ENCODE measurements at regions of chr12 and their contacts with region 1.

Region 1: DNA sequence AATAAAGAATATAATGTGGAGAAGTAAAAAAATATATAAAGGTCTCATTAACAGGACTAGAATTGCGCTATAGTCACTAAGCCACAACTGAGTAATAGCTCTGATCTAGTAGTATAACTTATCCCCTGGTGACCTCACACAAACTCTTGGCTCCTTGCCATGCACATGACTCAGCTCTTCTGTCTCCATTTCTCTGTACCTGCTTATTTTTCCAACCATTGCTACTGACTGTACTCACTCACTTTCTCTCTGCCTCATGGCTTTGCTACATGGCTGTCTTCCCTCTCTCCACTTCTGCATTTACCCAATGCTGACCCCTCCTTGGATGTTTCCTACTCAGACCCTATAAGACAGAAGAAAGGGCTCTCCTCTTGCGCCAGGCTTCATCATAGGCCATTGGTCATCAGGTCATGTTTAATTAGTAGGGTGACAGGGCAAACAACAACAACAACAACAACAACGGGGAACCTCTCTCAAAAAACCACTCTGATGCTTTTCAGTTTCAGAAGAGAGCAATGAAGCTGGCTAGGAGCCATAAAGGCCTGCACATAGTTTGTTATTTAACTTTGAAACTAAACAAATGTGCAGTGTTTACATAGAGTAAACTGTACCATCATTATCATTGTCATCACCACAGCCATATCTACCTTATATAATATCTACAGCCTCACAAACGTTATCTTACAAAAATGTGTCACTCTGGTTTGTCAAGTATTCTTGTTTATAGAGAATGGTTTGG is 25.6 kb upstream of the KRAS start:
- DNase-seq: peak; percentile 90
- H3K4me3 Mint-ChIP-seq: no peak overlapping the region
- H3K27ac Mint-ChIP-seq: peak overlapping the region; percentile 14
- H3K4me1 Mint-ChIP-seq: peaks cover 29% of the 10 kb centered on the region
- H3K27me3 Mint-ChIP-seq: no peaks in the 10 kb centered on the region

Region 2: DNA sequence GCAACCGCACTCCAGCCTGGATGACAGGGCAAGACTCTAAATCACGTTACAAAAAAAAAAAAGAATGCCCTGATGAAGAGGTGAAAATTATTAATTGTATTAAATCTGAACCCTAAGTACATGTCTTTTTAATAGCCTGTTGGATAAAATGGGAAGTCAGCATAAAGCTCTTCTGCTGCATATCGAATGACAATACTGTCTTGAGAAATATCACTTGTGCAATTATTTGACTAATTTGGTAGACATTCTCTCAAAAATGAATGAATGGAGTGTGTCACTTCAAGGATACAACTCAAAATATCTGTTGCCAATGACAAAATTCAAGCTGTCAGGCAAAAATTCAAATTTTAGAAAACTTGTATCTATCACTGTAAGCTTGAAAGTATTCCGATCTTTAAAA is 120.3 kb before region 1 on chr12:
- CTCF ChIA-PET with region 1: no interaction called
- intact Hi-C with region 1: no loop called
- DNase-seq: no peak
- H3K4me3 Mint-ChIP-seq: no peak overlapping the region
- H3K27ac Mint-ChIP-seq: no peak overlapping the region
- H3K4me1 Mint-ChIP-seq: peaks cover 6% of the 10 kb centered on the region
- H3K27me3 Mint-ChIP-seq: no peaks in the 10 kb centered on the region

Region 3: GRCh38 chr12:25250744-25251730 is 25.3 kb before region 1 on chr12 and contains the start of gene KRAS:
- CTCF ChIA-PET with region 1: no interaction called
- intact Hi-C with region 1: loop called (anchors 1 kb)
- DNase-seq: peak; percentile 94
- H3K4me3 Mint-ChIP-seq: peak within 1 kb of the TSS; percentile 93
- H3K27ac Mint-ChIP-seq: peak within 1 kb of the TSS; percentile 88
- H3K4me1 Mint-ChIP-seq: peaks cover 43% of the 10 kb centered on the region
- H3K27me3 Mint-ChIP-seq: no peaks in the 10 kb centered on the region
- total RNA-seq, gene KRAS: 18.9 to 20.6 TPM

Region 4: GRCh38 chr12:25262389-25263074 is 13.8 kb before region 1 on chr12:
- CTCF ChIA-PET with region 1: interaction called, 3 read pairs
- intact Hi-C with region 1: loop called (anchors 2 kb)
- DNase-seq: no peak
- H3K4me3 Mint-ChIP-seq: no peak overlapping the region
- H3K27ac Mint-ChIP-seq: no peak overlapping the region
- H3K4me1 Mint-ChIP-seq: peaks cover 3% of the 10 kb centered on the region
- H3K27me3 Mint-ChIP-seq: no peaks in the 10 kb centered on the region